WTC11 (cell line): ENCODE measurements at regions of chrX and their contacts with region 1.

Region 1: DNA sequence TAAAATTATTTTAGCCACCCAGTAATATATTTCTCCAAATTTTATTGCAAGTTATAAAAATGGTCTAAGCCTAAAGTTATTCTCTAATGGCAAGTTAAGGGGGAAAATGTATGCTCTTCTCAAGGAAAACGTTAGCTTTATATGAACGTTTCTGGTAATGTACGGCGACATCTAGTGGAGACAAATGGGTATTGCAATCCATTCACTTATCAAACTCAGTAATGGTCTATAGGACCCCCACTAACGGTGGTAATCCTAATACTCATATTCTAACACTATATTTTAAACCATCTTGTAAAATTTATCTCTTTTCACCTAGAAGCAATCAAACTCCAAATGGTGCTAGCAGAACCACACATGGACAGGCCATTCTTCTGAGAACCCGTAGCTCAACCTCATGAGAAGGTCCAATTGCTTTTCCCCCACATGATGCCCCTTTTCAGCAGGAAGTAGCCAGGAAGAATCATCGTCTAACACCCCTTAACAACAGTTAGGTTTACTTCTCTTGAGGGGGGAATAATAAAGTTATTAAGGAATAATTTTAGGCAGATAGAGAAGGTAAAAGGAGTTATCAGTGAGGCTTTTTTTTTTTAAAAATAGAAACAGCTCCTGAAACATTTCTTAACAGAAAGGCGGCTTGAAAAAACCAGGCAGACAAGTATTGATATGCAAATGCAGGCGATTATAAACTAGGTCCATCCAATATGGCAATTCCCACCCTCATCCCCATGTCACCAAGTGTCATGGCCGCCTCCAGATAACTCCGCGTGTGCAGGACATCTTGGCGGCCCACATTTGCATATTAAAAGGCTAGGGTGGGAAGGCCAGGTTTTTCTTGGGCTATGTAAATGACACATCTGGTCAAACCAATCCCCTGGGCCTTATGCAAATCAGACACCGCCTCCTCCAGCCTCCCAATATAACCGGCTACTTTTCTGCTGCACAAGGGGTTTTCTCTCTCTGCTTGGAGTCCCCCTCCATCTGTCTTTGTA is 35.0 kb downstream of the NUDT11 start:
- DNase-seq: peak; percentile 28
- ATAC-seq: peak; percentile 62; the same call in 1 of the 2 replicates
- H3K4me3 Mint-ChIP-seq: no peak overlapping the region
- H3K27ac Mint-ChIP-seq: no peak overlapping the region
- H3K4me1 Mint-ChIP-seq: peaks cover 16% of the 10 kb centered on the region
- H3K27me3 Mint-ChIP-seq: no peaks in the 10 kb centered on the region
- CTCF ChIP-seq: peak; percentile 61

Region 2: DNA sequence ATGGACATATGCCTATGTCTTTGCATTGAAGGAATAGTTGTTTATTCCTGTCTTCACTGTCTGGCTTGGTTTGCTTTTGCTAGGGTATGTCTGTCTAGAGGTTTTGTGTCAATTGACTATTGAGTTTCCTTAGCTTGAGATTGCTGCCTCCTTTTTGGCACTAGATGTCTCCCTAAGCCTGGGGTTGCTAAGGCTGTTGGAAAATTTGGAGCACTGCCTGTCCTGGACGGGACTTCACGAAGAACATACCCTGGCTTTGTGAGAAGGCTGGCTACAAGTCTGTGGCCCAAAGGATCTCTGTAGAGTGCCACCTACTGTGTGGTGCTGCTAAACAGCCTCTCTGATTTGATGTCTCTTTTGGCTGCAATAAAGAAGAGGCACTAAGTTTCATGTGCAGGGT is 312.5 kb before region 1 on chrX:
- CTCF ChIA-PET with region 1: interaction called, 31 read pairs
- POLR2A ChIA-PET with region 1: no interaction called
- DNase-seq: peak; percentile 19
- ATAC-seq: peak; percentile 90
- H3K4me3 Mint-ChIP-seq: no peak overlapping the region
- H3K27ac Mint-ChIP-seq: no peak overlapping the region
- H3K4me1 Mint-ChIP-seq: peaks cover 7% of the 10 kb centered on the region
- H3K27me3 Mint-ChIP-seq: no peaks in the 10 kb centered on the region
- CTCF ChIP-seq: no peak

Region 3: GRCh38 chrX:51336584-51336983 is 124.8 kb before region 1 on chrX:
- CTCF ChIA-PET with region 1: interaction called, 53 read pairs
- POLR2A ChIA-PET with region 1: no interaction called
- DNase-seq: peak; percentile 10
- ATAC-seq: peak; percentile 44
- H3K4me3 Mint-ChIP-seq: no peak overlapping the region
- H3K27ac Mint-ChIP-seq: no peak overlapping the region
- H3K4me1 Mint-ChIP-seq: peaks cover 22% of the 10 kb centered on the region
- H3K27me3 Mint-ChIP-seq: 0 out of 2 replicates have a peak, but pooled peaks cover 3% of the 10 kb centered on the region
- CTCF ChIP-seq: no peak; the same call in 1 of the 2 replicates

Region 4: DNA sequence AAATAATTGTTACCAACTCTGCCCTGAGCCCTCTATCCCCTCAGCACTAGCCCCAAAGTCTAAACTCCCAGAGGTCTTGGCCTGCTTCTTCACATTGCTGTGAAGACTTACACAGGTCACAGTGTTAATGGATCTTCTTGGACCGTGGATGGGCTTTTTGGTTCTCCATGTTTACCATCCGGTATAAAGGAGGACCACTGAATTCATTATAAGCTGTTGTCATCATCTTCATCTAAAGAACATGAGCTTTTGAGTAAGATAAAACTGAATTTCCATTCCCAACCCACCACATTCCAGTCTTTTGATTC is 26.6 kb after region 1 on chrX:
- CTCF ChIA-PET with region 1: interaction called, 11 read pairs
- POLR2A ChIA-PET with region 1: no interaction called
- DNase-seq: no peak
- ATAC-seq: no peak
- H3K4me3 Mint-ChIP-seq: no peak overlapping the region
- H3K27ac Mint-ChIP-seq: no peak overlapping the region
- H3K4me1 Mint-ChIP-seq: 0 out of 2 replicates have a peak, but pooled peaks cover 6% of the 10 kb centered on the region
- H3K27me3 Mint-ChIP-seq: no peaks in the 10 kb centered on the region
- CTCF ChIP-seq: no peak

Region 5: DNA sequence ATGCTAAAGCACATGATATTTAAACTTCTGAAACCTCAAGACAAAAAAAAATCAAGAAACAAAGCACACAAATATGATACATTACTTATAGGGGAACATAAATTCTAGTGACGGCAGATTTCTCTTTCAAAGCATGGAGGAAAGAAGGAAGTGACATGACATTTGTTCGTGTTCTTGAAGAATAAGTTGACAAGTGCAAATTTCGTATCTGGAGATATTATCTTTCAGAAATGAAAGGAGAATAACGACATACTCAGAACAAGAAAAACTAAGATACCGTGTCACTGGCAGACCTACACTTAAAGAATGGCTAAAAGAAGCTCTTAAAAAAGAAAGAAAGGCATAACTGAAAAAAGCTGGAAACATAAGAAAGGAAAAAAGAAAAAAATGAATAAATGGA is 204.6 kb after region 1 on chrX:
- CTCF ChIA-PET with region 1: no interaction called
- POLR2A ChIA-PET with region 1: no interaction called
- DNase-seq: no peak
- ATAC-seq: no peak
- H3K4me3 Mint-ChIP-seq: no peak overlapping the region
- H3K27ac Mint-ChIP-seq: no peak overlapping the region
- H3K4me1 Mint-ChIP-seq: no peaks in the 10 kb centered on the region
- H3K27me3 Mint-ChIP-seq: peaks cover 8% of the 10 kb centered on the region
- CTCF ChIP-seq: no peak

Region 6: GRCh38 chrX:51860679-51861078 is 399.3 kb after region 1 on chrX:
- CTCF ChIA-PET with region 1: no interaction called
- POLR2A ChIA-PET with region 1: no interaction called
- DNase-seq: peak; percentile 13
- ATAC-seq: peak; percentile 79
- H3K4me3 Mint-ChIP-seq: no peak overlapping the region
- H3K27ac Mint-ChIP-seq: peak overlapping the region; percentile 80
- H3K4me1 Mint-ChIP-seq: peaks cover 18% of the 10 kb centered on the region
- H3K27me3 Mint-ChIP-seq: no peaks in the 10 kb centered on the region
- CTCF ChIP-seq: peak; percentile 20; the same call in 1 of the 2 replicates